ENCODE measurements at regions of chrX and their contacts with region 1.

Region 1: DNA sequence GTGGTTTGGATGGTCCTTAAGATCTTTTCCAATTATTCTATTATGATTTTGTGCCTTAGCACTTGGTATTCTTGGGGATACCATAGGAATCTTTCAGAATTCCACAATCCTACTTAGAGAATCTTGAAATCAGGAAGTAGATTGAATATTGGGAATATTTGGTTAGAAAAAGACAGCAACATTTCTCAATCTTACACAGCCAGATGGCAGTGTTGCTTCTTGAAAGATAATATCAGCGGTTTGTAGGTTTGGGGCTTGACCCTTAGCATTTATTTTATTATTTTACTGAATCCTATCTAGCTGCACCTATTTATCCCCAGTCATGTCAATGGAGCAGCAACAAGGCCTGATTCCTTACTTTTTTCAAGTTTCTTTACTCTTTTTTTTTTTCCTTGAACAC is 28.6 kb downstream of the MAGEB1 start:
- DNase-seq: no peak
- H3K4me3 ChIP-seq: no peak overlapping the region
- H3K27ac ChIP-seq: no peak overlapping the region
- H3K4me1 ChIP-seq: no peaks in the 10 kb centered on the region
- H3K27me3 ChIP-seq: no peaks in the 10 kb centered on the region
- CTCF ChIP-seq: peak in 2 of 3 experiments; percentile 17 to 26

Region 2: DNA sequence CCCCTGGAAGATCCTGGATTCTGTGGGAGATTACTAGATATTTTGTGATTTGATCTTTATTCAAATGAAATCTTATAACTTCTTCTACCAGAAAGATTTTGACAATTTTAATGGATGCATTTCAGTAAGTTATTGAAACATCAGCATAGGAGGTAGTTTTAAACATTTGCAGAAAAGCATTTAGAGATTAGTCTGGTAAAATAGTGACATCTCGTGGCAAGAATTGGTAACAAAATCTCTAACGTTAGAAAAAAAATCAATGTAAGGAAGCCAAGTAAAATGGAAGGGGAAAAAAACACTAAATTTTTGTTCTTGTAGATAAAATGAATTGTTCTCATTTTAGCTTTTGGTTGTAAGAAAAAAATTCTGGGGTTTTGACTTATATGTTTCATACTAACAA is 228.8 kb after region 1 on chrX:
- intact Hi-C with region 1: loop called (anchors 5 kb)
- DNase-seq: no peak
- H3K4me3 ChIP-seq: no peak overlapping the region
- H3K27ac ChIP-seq: no peak overlapping the region
- H3K4me1 ChIP-seq: no peaks in the 10 kb centered on the region
- H3K27me3 ChIP-seq: no peaks in the 10 kb centered on the region
- CTCF ChIP-seq: peak; percentile 15 to 51 (median 39)

Region 3: DNA sequence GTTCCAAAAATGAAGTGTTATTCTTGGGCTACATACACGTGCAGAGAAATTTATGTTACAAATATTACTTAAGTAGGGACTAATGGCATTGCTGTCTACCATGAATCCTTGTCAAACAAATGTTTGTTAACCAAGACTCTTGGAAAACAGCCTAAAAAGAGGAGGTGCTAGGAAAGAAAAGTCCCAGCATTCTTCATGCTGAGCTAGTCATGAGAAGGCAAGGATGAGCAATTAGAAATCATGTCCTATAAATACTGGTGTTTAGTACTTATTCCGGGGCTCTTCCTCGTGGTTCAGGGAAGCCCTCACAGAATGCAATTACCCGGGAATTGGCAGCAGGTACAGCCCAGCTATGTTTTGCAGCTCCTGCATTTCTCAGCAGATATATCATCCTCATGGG is 1174.5 kb after region 1 on chrX:
- intact Hi-C with region 1: no loop called
- DNase-seq: no peak
- H3K4me3 ChIP-seq: no peak overlapping the region
- H3K27ac ChIP-seq: peak overlapping the region in 1 of 2 donors; percentile 7
- H3K4me1 ChIP-seq: no peaks in the 10 kb centered on the region
- H3K27me3 ChIP-seq: no peaks in the 10 kb centered on the region
- CTCF ChIP-seq: no peak

Measured in ascending aorta (tissue), 2 donors.